ENCODE measurements at regions of chr10 and their contacts with region 1.

Region 1: DNA sequence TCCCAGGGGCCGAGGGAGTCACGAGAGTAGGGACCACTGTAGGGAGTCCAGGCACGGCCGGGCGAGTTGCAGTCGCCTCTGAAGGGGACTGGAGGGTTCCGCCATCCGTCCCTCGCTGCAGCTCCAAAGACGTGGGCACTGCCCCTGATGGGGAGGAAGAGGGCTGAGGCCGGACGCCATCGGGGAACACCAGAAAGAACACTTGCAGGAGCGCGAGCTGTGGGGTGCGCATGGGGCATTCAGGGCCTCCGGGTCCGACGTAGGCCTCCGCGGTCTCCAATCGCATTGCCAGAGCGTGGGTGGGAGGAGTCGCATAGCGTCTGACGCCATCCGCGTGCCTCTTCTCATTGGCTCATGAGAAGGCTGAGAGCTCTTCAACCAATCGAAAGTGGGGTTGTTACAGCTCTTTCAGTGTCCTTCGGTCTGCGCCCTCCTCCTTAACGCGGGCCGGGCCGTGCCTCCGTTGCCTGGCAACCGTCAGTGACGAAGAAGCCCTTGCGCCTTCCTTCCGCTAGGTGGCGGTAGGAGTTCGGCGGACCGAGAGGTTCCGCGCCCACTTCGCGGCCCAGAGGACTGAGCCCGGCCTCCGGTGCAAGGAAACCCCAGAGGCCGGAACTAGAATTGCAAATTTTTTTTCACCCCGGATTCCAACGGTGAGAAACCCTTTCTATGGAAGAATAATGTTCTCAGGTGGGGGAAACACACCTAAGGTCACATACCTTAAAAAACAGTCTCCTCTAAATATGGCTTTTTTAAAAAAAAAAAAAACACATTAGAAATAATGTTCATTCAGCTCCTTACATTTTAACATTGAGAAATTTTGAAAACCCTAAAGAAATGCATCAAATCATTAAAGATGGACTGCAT is at the start of gene TCTN3:
- DNase-seq: peak; percentile 95
- H3K4me3 ChIP-seq: peak within 1 kb of the TSS; percentile 85 to 98
- H3K27ac ChIP-seq: peak within 1 kb of the TSS; percentile 64 to 72; a peak in 2 of 4 replicates
- H3K4me1 ChIP-seq: peaks cover 5 to 7% of the 10 kb centered on the region in 2 experiments; a peak in 2 of 4 replicates
- H3K27me3 ChIP-seq: no peaks in the 10 kb centered on the region; the same call in 1 of the 2 replicates
- CTCF ChIP-seq: peak; percentile 98
- EP300 ChIP-seq: peak in 1 of 2 experiments; percentile 14; a peak in 1 of 4 replicates
- RAD21 ChIP-seq: peak; percentile 92
- polyA plus RNA-seq, gene TCTN3: 39.5 and 59.4 TPM in 2 replicates

Region 2: GRCh38 chr10:95664543-95664942 is 29.4 kb before region 1 on chr10:
- CTCF ChIA-PET with region 1: interaction called, 12 read pairs
- POLR2A ChIA-PET with region 1: no interaction called
- DNase-seq: no peak
- H3K4me3 ChIP-seq: no peak overlapping the region
- H3K27ac ChIP-seq: no peak overlapping the region
- H3K4me1 ChIP-seq: no peaks in the 10 kb centered on the region
- H3K27me3 ChIP-seq: no peaks in the 10 kb centered on the region
- CTCF ChIP-seq: no peak
- EP300 ChIP-seq: no peak
- RAD21 ChIP-seq: no peak

Region 3: GRCh38 chr10:95706986-95707385 is 13.1 kb after region 1 on chr10:
- CTCF ChIA-PET with region 1: interaction called, 11 read pairs
- POLR2A ChIA-PET with region 1: no interaction called
- DNase-seq: no peak
- H3K4me3 ChIP-seq: no peak overlapping the region
- H3K27ac ChIP-seq: no peak overlapping the region
- H3K4me1 ChIP-seq: no peaks in the 10 kb centered on the region
- H3K27me3 ChIP-seq: no peaks in the 10 kb centered on the region
- CTCF ChIP-seq: no peak
- EP300 ChIP-seq: no peak
- RAD21 ChIP-seq: no peak

Region 4: DNA sequence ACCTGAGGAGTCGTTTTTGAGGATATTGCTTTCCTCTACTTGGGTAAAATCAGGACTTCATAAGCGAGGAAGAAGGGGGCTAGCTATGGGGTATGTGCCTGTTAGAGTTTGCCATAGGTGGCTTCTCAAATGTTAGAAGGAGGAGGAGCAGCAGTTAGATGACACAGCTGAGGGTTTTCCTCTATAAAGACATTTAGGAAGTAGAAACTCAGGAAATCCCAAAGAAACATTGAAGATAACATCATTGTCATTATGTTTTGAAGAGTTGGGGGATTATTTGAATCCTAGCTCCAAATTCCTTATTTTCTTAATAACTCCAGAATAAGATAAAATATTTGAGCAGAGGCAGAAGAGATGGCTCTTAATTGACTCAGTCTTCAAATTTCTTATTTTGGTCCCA is 154.9 kb after region 1 on chr10:
- CTCF ChIA-PET with region 1: interaction called, 50 read pairs
- POLR2A ChIA-PET with region 1: no interaction called
- DNase-seq: no peak
- H3K4me3 ChIP-seq: no peak overlapping the region
- H3K27ac ChIP-seq: no peak overlapping the region
- H3K4me1 ChIP-seq: no peaks in the 10 kb centered on the region
- H3K27me3 ChIP-seq: no peaks in the 10 kb centered on the region
- CTCF ChIP-seq: no peak
- EP300 ChIP-seq: no peak
- RAD21 ChIP-seq: no peak

Region 5: DNA sequence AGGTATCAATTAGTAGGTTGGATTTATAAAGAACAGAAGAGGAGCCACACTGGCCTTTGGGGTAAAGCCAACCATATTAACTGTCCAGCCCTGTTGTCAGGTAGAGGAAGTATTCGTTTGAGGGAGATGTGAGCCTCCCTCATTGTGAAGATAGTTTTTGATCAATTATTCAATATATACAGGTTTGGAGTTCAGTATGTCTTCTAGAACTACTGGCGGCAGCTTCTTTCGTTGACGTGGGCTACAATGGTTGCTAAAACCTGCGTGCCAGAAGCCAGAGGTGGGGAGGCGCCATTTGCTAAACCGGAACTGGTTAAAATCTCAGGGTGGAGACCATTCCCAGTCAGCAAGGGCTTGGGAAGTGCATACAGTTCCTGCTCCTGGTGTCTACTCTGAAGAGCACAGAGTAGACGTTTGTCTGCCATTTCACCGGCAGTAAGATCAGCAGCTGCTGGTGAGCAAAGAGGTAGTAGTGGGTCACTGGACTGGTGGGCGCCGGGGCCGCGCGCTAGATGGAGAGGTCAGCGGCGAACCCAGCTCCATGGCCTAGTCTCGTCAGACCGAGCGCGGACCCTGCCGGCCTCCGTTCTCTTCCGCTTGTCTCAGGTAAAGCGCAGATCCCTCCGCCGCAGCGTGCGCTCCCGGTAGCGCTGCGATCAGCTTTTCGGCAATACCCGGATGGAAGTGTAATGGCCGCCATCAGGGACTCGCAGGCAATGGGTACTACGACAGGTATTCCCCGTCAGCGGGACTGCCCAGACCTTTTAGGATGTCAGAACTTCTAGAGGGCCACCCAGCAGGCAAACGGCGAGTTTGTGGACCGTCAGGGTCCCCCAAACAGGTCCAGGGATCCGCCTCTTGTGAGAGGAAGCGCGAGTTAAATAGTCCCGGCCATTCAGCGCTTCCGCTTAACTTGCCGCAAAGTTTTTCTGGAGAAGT is 435.8 kb after region 1 on chr10 and contains the start of gene ZNF518A:
- CTCF ChIA-PET with region 1: interaction called, 5 read pairs
- POLR2A ChIA-PET with region 1: interaction called, 13 read pairs
- DNase-seq: peak; percentile 88
- H3K4me3 ChIP-seq: peak within 1 kb of the TSS; percentile 77 to 85
- H3K27ac ChIP-seq: peak within 1 kb of the TSS; percentile 89 to 99
- H3K4me1 ChIP-seq: peaks cover 5 to 7% of the 10 kb centered on the region in 2 experiments; a peak in 3 of 4 replicates
- H3K27me3 ChIP-seq: no peaks in the 10 kb centered on the region
- CTCF ChIP-seq: no peak
- EP300 ChIP-seq: peak in 1 of 2 experiments; percentile 47; a peak in 2 of 4 replicates
- RAD21 ChIP-seq: no peak
- polyA plus RNA-seq, gene ZNF518A: 1.7 and 2.4 TPM in 2 replicates

Measured in SK-N-SH (cell line).